H1 (cell line): ENCODE measurements at regions of chr5 and their contacts with region 1.

Region 1: DNA sequence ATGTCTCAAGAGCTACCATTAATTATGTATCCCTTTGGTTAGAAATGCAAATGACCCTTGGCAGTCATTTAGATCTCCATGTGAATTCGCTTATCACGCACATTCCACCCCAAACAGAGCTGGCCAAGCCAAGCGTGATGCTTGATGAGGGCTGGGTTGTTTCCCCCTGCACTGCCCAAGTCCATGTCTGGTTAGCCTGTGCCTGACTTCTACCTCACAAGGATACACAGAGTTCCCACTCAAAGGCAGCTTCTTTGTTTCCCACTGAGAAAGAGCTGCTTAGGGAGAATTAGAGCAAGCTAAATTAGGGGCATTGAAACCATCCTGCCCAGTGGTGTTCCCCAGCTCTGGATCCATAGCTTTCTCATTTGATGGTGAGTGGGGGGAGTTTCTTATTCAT is 87.2 kb downstream of the FSTL4 start:
- DNase-seq: no peak
- H3K4me3 ChIP-seq: no peak overlapping the region
- H3K27ac ChIP-seq: no peak overlapping the region
- H3K4me1 ChIP-seq: peaks cover 0 to 5% (median 2%) of the 10 kb centered on the region in 4 experiments; a peak in 4 of 7 replicates
- H3K27me3 ChIP-seq: no peaks in the 10 kb centered on the region
- CTCF ChIP-seq: no peak
- EP300 ChIP-seq: no peak
- POLR2A ChIP-seq: no peak
- RAD21 ChIP-seq: no peak

Region 2: GRCh38 chr5:133307275-133307674 is 217.9 kb before region 1 on chr5:
- CTCF ChIA-PET with region 1: no interaction called
- POLR2A ChIA-PET with region 1: no interaction called
- DNase-seq: no peak
- H3K4me3 ChIP-seq: no peak overlapping the region
- H3K27ac ChIP-seq: no peak overlapping the region
- H3K4me1 ChIP-seq: no peaks in the 10 kb centered on the region
- H3K27me3 ChIP-seq: no peaks in the 10 kb centered on the region
- CTCF ChIP-seq: no peak
- EP300 ChIP-seq: no peak
- POLR2A ChIP-seq: no peak
- RAD21 ChIP-seq: no peak

Region 3: DNA sequence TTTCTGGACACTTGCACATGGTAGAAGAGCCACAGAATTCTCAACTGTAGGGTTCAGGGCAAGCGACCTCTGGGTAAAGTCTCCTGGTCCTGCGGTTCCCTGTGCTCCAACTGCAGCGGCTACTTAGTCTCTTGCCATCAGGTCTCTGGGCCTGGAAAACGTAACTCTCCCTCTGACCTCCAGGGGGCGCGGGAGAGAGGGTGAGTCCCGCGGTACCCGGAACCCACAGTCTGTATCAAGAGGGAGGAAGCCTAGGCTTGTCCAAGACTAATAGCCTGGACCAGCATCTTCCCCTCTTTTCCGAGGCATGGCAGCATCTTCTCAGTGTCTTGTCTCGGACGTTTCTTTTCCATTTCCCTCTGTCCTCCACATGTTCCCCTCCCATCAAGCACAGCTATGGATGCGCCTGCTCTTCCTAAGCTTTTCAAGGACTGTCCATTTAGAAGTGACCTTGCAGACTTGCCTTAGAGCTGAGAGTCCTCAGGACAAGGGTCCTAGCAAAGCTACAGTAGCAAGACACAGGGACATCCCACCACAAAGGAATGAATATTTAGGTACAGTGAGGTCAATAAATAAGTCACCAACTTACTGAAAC is 27.9 kb after region 1 on chr5:
- CTCF ChIA-PET with region 1: interaction called, 10 read pairs
- POLR2A ChIA-PET with region 1: no interaction called
- DNase-seq: peak; percentile 38 to 89
- H3K4me3 ChIP-seq: no peak overlapping the region
- H3K27ac ChIP-seq: no peak overlapping the region
- H3K4me1 ChIP-seq: peaks cover 0 to 8% (median 5%) of the 10 kb centered on the region in 4 experiments; a peak in 4 of 7 replicates
- H3K27me3 ChIP-seq: no peaks in the 10 kb centered on the region; a peak in 1 of 7 replicates
- CTCF ChIP-seq: peak; percentile 83 to 90 (median 86)
- EP300 ChIP-seq: no peak
- POLR2A ChIP-seq: no peak
- RAD21 ChIP-seq: peak; percentile 71 to 80